CD8-positive, alpha-beta T cell (primary cell): ENCODE measurements at regions of chr5 and their contacts with region 1.

Region 1: GRCh38 chr5:76402886-76403765 is at the start of gene IQGAP2:
- DNase-seq: peak; percentile 73 to 97 (median 82)
- ATAC-seq: peak; percentile 54
- H3K4me3 ChIP-seq: peak within 1 kb of the TSS; percentile 77 to 93
- H3K4me3 Mint-ChIP-seq: peak within 1 kb of the TSS; percentile 95
- H3K27ac ChIP-seq: peak within 1 kb of the TSS; percentile 86 to 90
- H3K27ac Mint-ChIP-seq: peak within 1 kb of the TSS; percentile 98
- H3K4me1 ChIP-seq: peaks cover 44% of the 10 kb centered on the region
- H3K4me1 Mint-ChIP-seq: peaks cover 54% of the 10 kb centered on the region
- H3K27me3 ChIP-seq: no peaks in the 10 kb centered on the region
- H3K27me3 Mint-ChIP-seq: no peaks in the 10 kb centered on the region
- CTCF ChIP-seq: peak; percentile 70
- total RNA-seq, gene IQGAP2: 30.9 to 34.3 TPM

Region 2: GRCh38 chr5:76325876-76326491 is 77.1 kb before region 1 on chr5:
- CTCF ChIA-PET with region 1: interaction called, 13 read pairs
- POLR2A ChIA-PET with region 1: interaction called, 15 read pairs
- intact Hi-C with region 1: loop called in 1 of 2 experiments (anchors 2 kb)
- DNase-seq: peak in 8 of 9 experiments; percentile 27 to 75 (median 42)
- ATAC-seq: peak; percentile 90
- H3K4me3 ChIP-seq: peak overlapping the region in 1 of 2 experiments; percentile 15
- H3K4me3 Mint-ChIP-seq: peak overlapping the region; percentile 73
- H3K27ac ChIP-seq: peak overlapping the region; percentile 39 to 78
- H3K27ac Mint-ChIP-seq: peak overlapping the region; percentile 95
- H3K4me1 ChIP-seq: peaks cover 39% of the 10 kb centered on the region
- H3K4me1 Mint-ChIP-seq: peaks cover 57% of the 10 kb centered on the region
- H3K27me3 ChIP-seq: no peaks in the 10 kb centered on the region
- H3K27me3 Mint-ChIP-seq: no peaks in the 10 kb centered on the region
- CTCF ChIP-seq: no peak

Region 3: GRCh38 chr5:76384189-76384588 is 18.9 kb before region 1 on chr5:
- CTCF ChIA-PET with region 1: interaction called, 16 read pairs
- POLR2A ChIA-PET with region 1: interaction called, 10 read pairs
- intact Hi-C with region 1: loop called in 1 of 2 experiments (anchors 2 kb)
- DNase-seq: no peak
- ATAC-seq: no peak
- H3K4me3 ChIP-seq: no peak overlapping the region
- H3K4me3 Mint-ChIP-seq: peak overlapping the region; percentile 22
- H3K27ac ChIP-seq: peak overlapping the region in 1 of 2 experiments; percentile 34
- H3K27ac Mint-ChIP-seq: no peak overlapping the region
- H3K4me1 ChIP-seq: peaks cover 32% of the 10 kb centered on the region
- H3K4me1 Mint-ChIP-seq: peaks cover 44% of the 10 kb centered on the region
- H3K27me3 ChIP-seq: no peaks in the 10 kb centered on the region
- H3K27me3 Mint-ChIP-seq: no peaks in the 10 kb centered on the region
- CTCF ChIP-seq: no peak

Region 4: GRCh38 chr5:76544268-76544926 is 141.3 kb after region 1 on chr5:
- CTCF ChIA-PET with region 1: interaction called, 65 read pairs
- POLR2A ChIA-PET with region 1: interaction called, 46 read pairs
- intact Hi-C with region 1: loop called (anchors 1 kb)
- DNase-seq: peak; percentile 25 to 80 (median 53)
- ATAC-seq: peak; percentile 10
- H3K4me3 ChIP-seq: peak overlapping the region in 1 of 2 experiments; percentile 2
- H3K4me3 Mint-ChIP-seq: peak overlapping the region; percentile 77
- H3K27ac ChIP-seq: peak overlapping the region; percentile 77 to 91
- H3K27ac Mint-ChIP-seq: peak overlapping the region; percentile 97
- H3K4me1 ChIP-seq: peaks cover 68% of the 10 kb centered on the region
- H3K4me1 Mint-ChIP-seq: peaks cover 87% of the 10 kb centered on the region
- H3K27me3 ChIP-seq: no peaks in the 10 kb centered on the region
- H3K27me3 Mint-ChIP-seq: no peaks in the 10 kb centered on the region
- CTCF ChIP-seq: peak; percentile 66

Region 5: DNA sequence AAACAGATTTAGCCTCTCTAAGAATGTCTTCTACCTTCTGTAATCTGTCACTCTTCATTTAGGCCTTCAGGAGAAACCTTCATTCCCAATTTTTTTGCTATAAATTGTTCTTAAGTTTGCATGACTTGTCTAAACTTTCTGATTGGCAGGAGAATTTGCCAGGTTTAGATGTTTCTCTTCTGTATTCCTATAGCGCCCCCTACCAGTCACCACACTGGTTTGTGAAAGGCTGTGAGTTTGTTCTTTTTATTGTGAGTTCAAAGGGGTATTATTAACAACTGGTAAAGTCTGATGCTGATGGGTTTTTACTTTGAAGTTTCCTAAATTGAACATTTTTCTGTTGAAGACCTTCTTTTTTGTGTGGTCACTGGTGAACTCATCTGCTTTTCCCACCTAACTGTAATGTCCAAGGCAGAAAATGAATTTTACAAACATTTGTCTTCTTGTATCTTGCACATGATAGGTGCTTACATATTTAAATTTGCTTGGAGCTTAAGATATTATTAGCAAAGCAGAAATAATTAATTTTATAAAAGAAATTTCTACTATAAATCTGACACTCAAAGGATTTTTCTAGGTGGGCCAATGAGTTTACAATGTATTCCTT is 238.5 kb after region 1 on chr5:
- CTCF ChIA-PET with region 1: interaction called, 4 read pairs
- POLR2A ChIA-PET with region 1: no interaction called
- intact Hi-C with region 1: loop called in 1 of 2 experiments (anchors 2 kb)
- DNase-seq: peak; percentile 16 to 78 (median 67)
- ATAC-seq: peak; percentile 54
- H3K4me3 ChIP-seq: no peak overlapping the region
- H3K4me3 Mint-ChIP-seq: no peak overlapping the region
- H3K27ac ChIP-seq: no peak overlapping the region
- H3K27ac Mint-ChIP-seq: no peak overlapping the region
- H3K4me1 ChIP-seq: no peaks in the 10 kb centered on the region
- H3K4me1 Mint-ChIP-seq: no peaks in the 10 kb centered on the region
- H3K27me3 ChIP-seq: no peaks in the 10 kb centered on the region
- H3K27me3 Mint-ChIP-seq: no peaks in the 10 kb centered on the region
- CTCF ChIP-seq: peak; percentile 74

Region 6: GRCh38 chr5:76771705-76772405 is 368.7 kb after region 1 on chr5:
- CTCF ChIA-PET with region 1: interaction called, 5 read pairs
- POLR2A ChIA-PET with region 1: no interaction called
- intact Hi-C with region 1: loop called in 1 of 2 experiments (anchors 10 kb)
- DNase-seq: no peak
- ATAC-seq: no peak
- H3K4me3 ChIP-seq: no peak overlapping the region
- H3K4me3 Mint-ChIP-seq: no peak overlapping the region
- H3K27ac ChIP-seq: no peak overlapping the region
- H3K27ac Mint-ChIP-seq: no peak overlapping the region
- H3K4me1 ChIP-seq: no peaks in the 10 kb centered on the region
- H3K4me1 Mint-ChIP-seq: peaks cover 3% of the 10 kb centered on the region
- H3K27me3 ChIP-seq: no peaks in the 10 kb centered on the region
- H3K27me3 Mint-ChIP-seq: no peaks in the 10 kb centered on the region
- CTCF ChIP-seq: no peak